ENCODE measurements at regions of chr12 and their contacts with region 1.

Region 1: GRCh38 chr12:9064201-9064814 is 51.4 kb downstream of the A2M start:
- DNase-seq: peak in 1 of 2 experiments; percentile 9
- H3K4me3 ChIP-seq: peak overlapping the region; percentile 52 to 83 (median 81)
- H3K27ac ChIP-seq: peak overlapping the region; percentile 80; the same call in 1 of the 2 replicates
- H3K4me1 ChIP-seq: peaks cover 0 to 9% (median 6%) of the 10 kb centered on the region in 4 experiments; a peak in 5 of 7 replicates
- H3K27me3 ChIP-seq: no peaks in the 10 kb centered on the region
- CTCF ChIP-seq: peak; percentile 43 to 54 (median 48)
- EP300 ChIP-seq: no peak
- POLR2A ChIP-seq: no peak; a peak in 1 of 3 replicates
- RAD21 ChIP-seq: peak; percentile 56 to 72

Region 2: DNA sequence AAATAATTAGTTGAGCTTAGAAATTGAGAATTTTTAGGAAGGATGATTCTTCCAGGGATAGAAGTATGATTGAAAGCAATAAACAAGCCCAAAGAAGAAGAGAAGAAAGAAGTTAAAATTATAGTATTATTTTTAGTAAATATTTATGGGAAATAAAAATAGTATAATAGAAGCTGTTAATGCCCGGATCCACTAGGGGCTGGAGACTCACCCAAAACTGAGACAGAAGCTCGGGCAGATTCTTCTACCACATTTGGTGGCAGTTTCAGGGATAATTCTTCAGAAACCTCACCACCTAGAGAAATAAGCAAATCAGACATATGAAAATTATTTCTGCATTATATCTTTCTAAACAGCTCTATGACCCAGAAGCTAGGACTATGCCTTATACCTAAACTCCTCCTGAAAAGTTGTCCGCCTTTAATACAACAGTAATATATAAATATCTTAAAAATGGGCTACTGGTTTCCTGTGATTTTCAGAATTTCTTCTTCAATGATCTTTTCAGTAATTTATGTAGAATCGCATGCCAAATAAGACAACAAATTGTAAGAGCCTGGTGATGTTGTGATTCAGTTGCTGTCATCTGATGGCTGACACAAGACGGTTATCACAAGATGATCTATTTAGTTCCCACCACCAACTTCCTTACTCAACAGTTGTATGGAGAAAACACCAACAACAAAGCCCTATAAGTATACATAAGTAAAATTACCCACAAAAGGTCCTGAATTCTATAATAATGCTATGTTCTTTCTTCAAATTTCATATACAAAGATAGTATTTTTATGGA is 15.8 kb after region 1 on chr12:
- CTCF ChIA-PET with region 1: interaction called, 13 read pairs
- POLR2A ChIA-PET with region 1: interaction called, 7 read pairs
- DNase-seq: no peak
- H3K4me3 ChIP-seq: no peak overlapping the region
- H3K27ac ChIP-seq: no peak overlapping the region
- H3K4me1 ChIP-seq: no peaks in the 10 kb centered on the region
- H3K27me3 ChIP-seq: peaks cover 0 to 1% (median 0%) of the 10 kb centered on the region in 4 experiments; a peak in 1 of 7 replicates
- CTCF ChIP-seq: no peak
- EP300 ChIP-seq: no peak
- POLR2A ChIP-seq: no peak
- RAD21 ChIP-seq: no peak; a peak in 1 of 4 replicates